PC-9 (cell line): ENCODE measurements at regions of chr16 and their contacts with region 1.

Region 1: GRCh38 chr16:85759631-85760419 is 8.9 kb upstream of the C16orf74 start:
- DNase-seq: peak in 1 of 2 experiments; percentile 71
- H3K4me3 ChIP-seq: no peak overlapping the region
- H3K27ac ChIP-seq: no peak overlapping the region
- H3K4me1 ChIP-seq: no peaks in the 10 kb centered on the region
- H3K27me3 ChIP-seq: no peaks in the 10 kb centered on the region
- CTCF ChIP-seq: peak; percentile 74

Region 2: GRCh38 chr16:85321509-85322271 is 438.1 kb before region 1 on chr16:
- CTCF ChIA-PET with region 1: no interaction called
- POLR2A ChIA-PET with region 1: interaction called, 16 read pairs
- intact Hi-C with region 1: no loop called
- DNase-seq: peak in 1 of 2 experiments; percentile 50
- H3K4me3 ChIP-seq: no peak overlapping the region
- H3K27ac ChIP-seq: no peak overlapping the region
- H3K4me1 ChIP-seq: no peaks in the 10 kb centered on the region
- H3K27me3 ChIP-seq: no peaks in the 10 kb centered on the region
- CTCF ChIP-seq: no peak

Region 3: GRCh38 chr16:85659805-85660495 is 99.9 kb before region 1 on chr16:
- CTCF ChIA-PET with region 1: no interaction called
- POLR2A ChIA-PET with region 1: no interaction called
- intact Hi-C with region 1: loop called (anchors 1 kb)
- DNase-seq: peak in 1 of 2 experiments; percentile 68
- H3K4me3 ChIP-seq: no peak overlapping the region
- H3K27ac ChIP-seq: no peak overlapping the region
- H3K4me1 ChIP-seq: no peaks in the 10 kb centered on the region
- H3K27me3 ChIP-seq: no peaks in the 10 kb centered on the region
- CTCF ChIP-seq: peak; percentile 88

Region 4: GRCh38 chr16:85675251-85675927 is 84.4 kb before region 1 on chr16:
- CTCF ChIA-PET with region 1: no interaction called
- POLR2A ChIA-PET with region 1: interaction called, 12 read pairs
- intact Hi-C with region 1: loop called (anchors 1 kb)
- DNase-seq: no peak
- H3K4me3 ChIP-seq: no peak overlapping the region
- H3K27ac ChIP-seq: no peak overlapping the region
- H3K4me1 ChIP-seq: no peaks in the 10 kb centered on the region
- H3K27me3 ChIP-seq: no peaks in the 10 kb centered on the region
- CTCF ChIP-seq: peak; percentile 57